Ascending aorta (tissue), 2 donors: ENCODE measurements at regions of chr19 and their contacts with region 1.

Region 1: DNA sequence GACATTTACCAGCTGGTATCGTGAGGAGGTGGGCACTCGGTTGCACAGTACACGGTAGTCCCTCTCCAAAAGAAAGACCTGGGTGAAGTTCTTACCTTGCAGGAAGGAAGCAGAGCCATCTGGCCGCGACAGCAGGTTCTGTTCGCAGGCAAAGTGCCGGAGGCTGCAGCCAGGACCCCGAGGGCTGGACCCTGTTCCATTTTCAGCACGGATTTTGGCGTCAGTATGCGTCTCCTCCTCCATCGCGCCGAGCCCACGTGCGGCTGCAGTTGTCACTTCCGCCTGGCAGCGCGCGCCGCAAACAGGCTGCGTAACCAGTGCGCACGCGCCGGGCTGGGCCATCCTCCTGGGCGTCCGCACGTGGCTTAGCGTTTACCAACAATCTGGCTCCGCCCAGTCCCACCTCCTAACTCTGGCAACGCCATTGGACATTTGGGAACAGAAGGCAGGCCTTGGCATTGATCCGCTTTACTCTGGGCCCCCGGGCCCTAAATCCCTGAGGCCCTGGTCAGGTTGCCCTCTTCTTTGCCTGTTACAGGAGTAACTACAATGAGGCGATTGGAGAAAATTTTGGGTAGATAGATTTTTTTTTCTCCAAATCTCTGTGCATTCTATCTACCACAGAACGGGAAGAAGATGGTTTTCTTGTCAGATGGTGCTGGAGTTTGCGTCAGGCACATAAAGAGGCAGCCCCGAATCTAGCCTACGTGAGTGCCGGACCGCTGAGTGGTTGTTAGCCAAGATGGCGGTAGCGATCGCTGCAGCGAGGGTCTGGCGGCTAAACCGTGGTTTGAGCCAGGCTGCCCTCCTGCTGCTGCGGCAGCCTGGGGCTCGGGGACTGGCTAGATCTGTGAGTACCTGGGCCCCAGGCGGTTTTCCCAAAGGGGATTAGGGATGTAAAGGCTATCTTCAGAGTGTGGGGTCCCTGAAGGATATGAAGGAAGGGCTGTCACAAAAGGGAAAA is at the starts of genes BCKDHA and EXOSC5:
- DNase-seq: peak; percentile 98 to 100
- H3K4me3 ChIP-seq: peak within 1 kb of the TSS; percentile 72 to 95
- H3K27ac ChIP-seq: peak within 1 kb of the TSS; percentile 83 to 86
- H3K4me1 ChIP-seq: peaks cover 7 to 9% of the 10 kb centered on the region in 2 donors
- H3K27me3 ChIP-seq: no peaks in the 10 kb centered on the region
- CTCF ChIP-seq: peak in 1 of 3 experiments; percentile 3
- total RNA-seq, gene BCKDHA: 28.5 TPM
- total RNA-seq, gene EXOSC5: 30.3 TPM

Region 2: DNA sequence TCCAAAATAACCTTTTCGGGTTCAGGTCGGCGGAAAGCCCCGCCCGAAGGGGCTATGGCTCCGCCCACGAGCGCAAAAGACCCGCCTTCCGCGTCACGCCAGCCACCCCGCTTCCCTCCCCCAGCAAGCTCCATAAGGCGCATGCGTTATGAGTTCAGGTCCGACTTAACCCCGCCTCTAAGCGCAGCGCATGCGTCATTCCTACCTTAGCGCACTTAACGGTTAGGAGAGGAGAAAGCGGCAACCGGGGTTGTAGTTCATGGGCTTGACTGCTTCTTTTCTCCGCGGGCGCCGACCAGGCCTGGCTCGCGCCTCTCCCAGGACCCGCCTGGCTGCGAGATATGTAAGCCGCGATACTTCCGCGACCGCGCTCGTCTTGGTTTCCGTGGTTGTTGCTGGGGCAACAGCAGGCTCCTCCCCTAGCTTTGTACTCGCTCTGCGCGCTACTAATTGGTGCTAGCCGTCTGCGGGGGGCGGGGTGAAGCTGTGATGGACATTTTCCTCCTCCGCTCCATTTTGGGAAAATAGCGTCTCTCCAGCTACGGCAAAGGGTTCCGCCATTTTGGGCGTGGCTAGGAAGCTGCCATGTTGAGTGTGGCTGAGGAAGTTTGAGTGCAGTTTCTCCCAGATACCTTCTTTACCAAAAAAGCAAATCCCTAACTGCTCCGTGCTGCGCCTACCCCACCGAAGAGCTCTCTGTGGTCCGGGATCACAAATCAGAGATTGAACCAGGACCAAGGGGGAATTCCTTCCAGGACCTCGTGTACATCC is 33.4 kb before region 1 on chr19 and contains the start of gene B9D2:
- intact Hi-C with region 1: loop called (anchors 1 kb)
- DNase-seq: peak; percentile 94 to 99
- H3K4me3 ChIP-seq: peak within 1 kb of the TSS; percentile 80
- H3K27ac ChIP-seq: peak within 1 kb of the TSS; percentile 97 to 98
- H3K4me1 ChIP-seq: peaks cover 0 to 11% of the 10 kb centered on the region in 2 donors
- H3K27me3 ChIP-seq: no peaks in the 10 kb centered on the region
- CTCF ChIP-seq: no peak
- total RNA-seq, gene B9D2: 17.5 TPM

Region 3: GRCh38 chr19:41376241-41376997 is 20.9 kb before region 1 on chr19 and contains the start of gene TMEM91:
- intact Hi-C with region 1: loop called (anchors 1 kb)
- DNase-seq: no peak
- H3K4me3 ChIP-seq: peak within 1 kb of the TSS; percentile 57 to 69
- H3K27ac ChIP-seq: peak within 1 kb of the TSS; percentile 71 to 75
- H3K4me1 ChIP-seq: peaks cover 0 to 14% of the 10 kb centered on the region in 2 donors
- H3K27me3 ChIP-seq: no peaks in the 10 kb centered on the region
- CTCF ChIP-seq: no peak
- total RNA-seq, gene TMEM91: 14.2 TPM

Region 4: GRCh38 chr19:41426952-41427646 is 29.7 kb after region 1 on chr19 and contains the start of gene B3GNT8:
- intact Hi-C with region 1: loop called (anchors 1 kb)
- DNase-seq: peak; percentile 36 to 91
- H3K4me3 ChIP-seq: peak within 1 kb of the TSS; percentile 48 to 80
- H3K27ac ChIP-seq: peak within 1 kb of the TSS; percentile 79 to 89
- H3K4me1 ChIP-seq: peaks cover 9 to 21% of the 10 kb centered on the region in 2 donors
- H3K27me3 ChIP-seq: no peaks in the 10 kb centered on the region
- CTCF ChIP-seq: no peak
- total RNA-seq, gene B3GNT8: 3.7 TPM

Region 5: DNA sequence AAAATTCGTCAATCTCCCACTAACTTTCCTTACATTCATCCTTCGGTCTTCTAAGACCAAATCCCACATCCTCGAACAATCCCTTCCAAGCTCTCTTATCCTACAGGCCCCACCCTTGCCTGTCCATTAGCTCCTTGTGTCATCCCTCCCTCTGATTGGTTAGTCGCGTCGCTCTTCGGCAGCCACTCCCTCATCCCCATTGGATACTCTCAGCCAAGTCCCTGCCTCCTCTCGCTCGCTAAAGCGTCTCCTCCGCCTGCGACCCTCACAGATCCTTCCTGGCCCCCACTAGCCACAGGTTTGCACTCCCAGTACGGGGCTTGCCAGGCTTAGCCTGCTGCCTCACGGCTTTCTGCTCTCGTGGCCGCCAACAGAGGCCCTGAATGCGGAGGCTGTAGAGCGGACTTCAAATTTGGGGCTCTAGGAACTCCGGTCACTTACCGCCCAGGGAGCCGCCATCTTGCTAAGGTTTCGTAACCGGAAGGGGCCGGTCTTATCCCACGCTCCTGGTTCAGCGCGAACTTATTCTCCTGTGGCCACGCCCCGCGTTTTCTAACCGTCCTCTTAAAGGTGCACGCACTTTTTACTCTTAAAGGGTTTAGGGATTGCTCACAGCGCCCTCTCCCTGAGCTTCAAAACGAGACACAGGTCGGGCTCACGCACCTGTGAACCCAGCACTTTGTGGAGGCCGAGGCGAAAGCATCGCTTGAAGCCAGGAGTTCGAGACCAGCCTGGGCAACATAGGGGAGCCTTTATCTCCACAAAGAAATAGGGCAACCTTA is 42.3 kb after region 1 on chr19 and contains the start of gene DMAC2:
- intact Hi-C with region 1: loop called (anchors 1 kb)
- DNase-seq: peak; percentile 90 to 99
- H3K4me3 ChIP-seq: peak within 1 kb of the TSS; percentile 66 to 78
- H3K27ac ChIP-seq: peak within 1 kb of the TSS; percentile 90 to 92
- H3K4me1 ChIP-seq: no peaks in the 10 kb centered on the region
- H3K27me3 ChIP-seq: no peaks in the 10 kb centered on the region
- CTCF ChIP-seq: peak in 2 of 3 experiments; percentile 51 to 61
- total RNA-seq, gene DMAC2: 21.2 TPM

Region 6: GRCh38 chr19:42032431-42032830 is 635.1 kb after region 1 on chr19:
- intact Hi-C with region 1: no loop called
- DNase-seq: no peak
- H3K4me3 ChIP-seq: no peak overlapping the region
- H3K27ac ChIP-seq: no peak overlapping the region
- H3K4me1 ChIP-seq: no peaks in the 10 kb centered on the region
- H3K27me3 ChIP-seq: no peaks in the 10 kb centered on the region
- CTCF ChIP-seq: no peak